ENCODE measurements at regions of chr3 and their contacts with region 1.

Region 1: GRCh38 chr3:129824926-129825541 is 68.5 kb downstream of the TMCC1 start:
- DNase-seq: no peak
- H3K4me3 Mint-ChIP-seq: no peak overlapping the region
- H3K27ac Mint-ChIP-seq: no peak overlapping the region
- H3K4me1 Mint-ChIP-seq: peaks cover 17% of the 10 kb centered on the region
- H3K27me3 Mint-ChIP-seq: no peaks in the 10 kb centered on the region

Region 2: DNA sequence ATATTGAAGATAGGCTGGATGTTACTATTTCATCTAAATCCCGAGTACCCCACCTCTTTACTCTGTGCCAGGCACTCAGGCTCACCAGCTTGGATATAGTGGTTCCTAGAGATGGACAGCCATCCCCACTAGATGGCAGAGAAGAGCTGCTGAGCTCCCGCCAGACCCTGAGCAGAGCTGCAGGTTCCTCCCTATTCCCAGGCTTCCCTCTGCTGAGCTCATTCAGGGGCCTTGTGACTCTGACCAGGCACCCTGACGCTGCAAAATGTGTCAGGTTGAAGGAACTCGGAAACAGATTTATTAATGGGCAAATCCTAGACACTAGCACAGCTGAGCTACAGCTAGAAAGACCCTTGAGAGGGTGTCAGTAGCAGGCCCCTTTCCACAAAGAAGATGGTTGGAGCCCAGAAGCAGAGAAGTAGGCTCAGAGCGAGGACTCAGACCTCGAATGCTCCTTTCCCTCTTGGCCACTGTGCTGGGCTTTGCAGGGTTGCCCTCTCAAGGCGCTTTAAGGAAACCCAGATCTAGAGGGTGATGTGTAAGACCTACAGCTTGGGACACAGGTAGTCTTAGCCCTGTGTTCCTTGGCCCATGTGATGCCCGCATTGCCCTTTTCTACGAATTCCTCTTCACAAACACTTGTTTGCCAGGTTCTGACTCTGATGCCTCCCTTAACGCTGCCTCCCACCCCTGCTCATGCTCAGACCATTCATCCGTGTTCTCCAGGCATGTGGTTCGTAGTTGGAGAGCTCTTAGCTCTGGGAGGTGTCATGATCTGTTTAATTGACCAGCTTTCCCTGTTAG is 334.6 kb before region 1 on chr3:
- intact Hi-C with region 1: loop called (anchors 2 kb)
- DNase-seq: peak; percentile 20
- H3K4me3 Mint-ChIP-seq: no peak overlapping the region
- H3K27ac Mint-ChIP-seq: no peak overlapping the region
- H3K4me1 Mint-ChIP-seq: no peaks in the 10 kb centered on the region
- H3K27me3 Mint-ChIP-seq: no peaks in the 10 kb centered on the region

Region 3: GRCh38 chr3:129549412-129550204 is 275.4 kb before region 1 on chr3:
- intact Hi-C with region 1: no loop called
- DNase-seq: no peak
- H3K4me3 Mint-ChIP-seq: no peak overlapping the region
- H3K27ac Mint-ChIP-seq: no peak overlapping the region
- H3K4me1 Mint-ChIP-seq: peaks cover 9% of the 10 kb centered on the region
- H3K27me3 Mint-ChIP-seq: peaks cover 10% of the 10 kb centered on the region

Region 4: GRCh38 chr3:129650256-129650872 is 174.7 kb before region 1 on chr3:
- intact Hi-C with region 1: loop called (anchors 1 kb)
- DNase-seq: peak; percentile 34
- H3K4me3 Mint-ChIP-seq: no peak overlapping the region
- H3K27ac Mint-ChIP-seq: no peak overlapping the region
- H3K4me1 Mint-ChIP-seq: peaks cover 2% of the 10 kb centered on the region
- H3K27me3 Mint-ChIP-seq: peaks cover 8% of the 10 kb centered on the region

Region 5: DNA sequence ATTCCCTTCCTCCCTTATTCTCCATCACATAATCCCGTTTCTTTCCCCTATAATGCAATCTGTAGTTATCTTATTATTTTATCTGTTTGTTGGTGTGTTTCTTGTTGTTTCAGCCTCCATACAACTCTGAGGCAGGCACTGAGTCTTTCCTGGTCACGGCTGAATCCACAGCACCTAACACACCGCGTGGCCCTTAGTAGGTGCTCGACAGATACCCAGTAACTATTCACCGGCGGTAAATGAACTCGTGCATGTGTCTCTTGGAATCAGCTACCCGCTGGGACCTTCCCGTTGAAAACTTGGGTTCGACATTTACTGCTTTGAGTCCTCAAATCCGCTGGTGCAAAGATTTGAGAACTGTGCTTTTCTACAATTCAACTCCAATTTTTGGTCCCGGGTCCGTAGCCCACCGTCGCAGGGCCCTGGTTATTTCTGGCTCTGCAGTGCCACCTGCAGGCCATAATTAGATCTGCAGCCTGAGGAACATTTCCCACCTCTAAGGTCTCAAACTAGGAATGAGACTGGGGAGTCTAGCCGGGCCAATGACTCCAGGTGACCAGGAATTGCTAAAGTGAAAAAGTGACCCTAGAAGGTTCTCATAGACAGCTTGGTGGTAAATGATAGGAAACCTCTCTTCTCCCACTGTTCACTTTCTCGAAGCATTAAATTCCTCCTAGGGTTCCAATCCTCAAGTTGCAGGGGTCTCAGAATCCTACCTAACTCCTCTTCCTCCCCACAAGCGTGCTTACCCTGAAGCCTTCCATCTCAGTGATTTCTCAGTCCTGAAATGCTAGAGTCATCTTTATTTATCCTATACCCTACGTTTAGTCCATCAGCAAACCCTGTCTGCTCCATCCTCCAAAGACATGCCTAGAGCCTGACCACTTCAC is 109.4 kb after region 1 on chr3:
- intact Hi-C with region 1: loop called (anchors 2 kb)
- DNase-seq: no peak
- H3K4me3 Mint-ChIP-seq: no peak overlapping the region
- H3K27ac Mint-ChIP-seq: no peak overlapping the region
- H3K4me1 Mint-ChIP-seq: peaks cover 7% of the 10 kb centered on the region
- H3K27me3 Mint-ChIP-seq: peaks cover 3% of the 10 kb centered on the region

Measured in activated T-helper 2 cell treated with anti-CD3 and anti-CD28 coated beads, Interferon-gamma antibody, Interleukin-2, Interleukin-4, amounts not matched to agents 10 μg/mL and 5 μg/mL and 100 μg/mL, durations not matched to agents 14 hours and 24 hours and 36 hours (primary cell).